CD8-positive, alpha-beta T cell (primary cell): ENCODE measurements at regions of chr16 and their contacts with region 1.

Region 1: DNA sequence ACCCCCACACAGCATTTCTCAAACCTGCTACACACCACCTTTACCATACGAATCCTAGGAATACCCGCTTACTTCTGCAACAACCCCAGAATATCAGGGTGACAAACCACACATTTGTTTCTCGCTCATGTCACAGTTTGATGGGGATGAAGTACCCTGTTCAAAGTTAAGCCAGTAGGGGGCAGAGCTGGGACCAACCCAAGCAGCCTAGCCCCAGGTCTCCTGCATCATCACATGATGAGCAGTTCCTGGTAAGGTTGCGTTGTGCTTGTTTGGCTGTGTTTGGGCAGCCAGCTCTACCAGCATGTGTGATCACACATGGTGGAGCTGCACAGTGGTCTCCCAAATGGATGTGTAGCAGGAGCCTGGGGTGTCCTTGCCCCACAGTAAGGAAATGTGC is 103.6 kb upstream of the C16orf82 start:
- DNase-seq: peak in 2 of 9 experiments; percentile 19 to 26
- ATAC-seq: no peak
- H3K4me3 ChIP-seq: no peak overlapping the region
- H3K4me3 Mint-ChIP-seq: no peak overlapping the region
- H3K27ac ChIP-seq: no peak overlapping the region
- H3K27ac Mint-ChIP-seq: no peak overlapping the region
- H3K4me1 ChIP-seq: no peaks in the 10 kb centered on the region
- H3K4me1 Mint-ChIP-seq: peaks cover 7% of the 10 kb centered on the region
- H3K27me3 ChIP-seq: no peaks in the 10 kb centered on the region
- H3K27me3 Mint-ChIP-seq: peaks cover 16% of the 10 kb centered on the region
- CTCF ChIP-seq: no peak

Region 2: DNA sequence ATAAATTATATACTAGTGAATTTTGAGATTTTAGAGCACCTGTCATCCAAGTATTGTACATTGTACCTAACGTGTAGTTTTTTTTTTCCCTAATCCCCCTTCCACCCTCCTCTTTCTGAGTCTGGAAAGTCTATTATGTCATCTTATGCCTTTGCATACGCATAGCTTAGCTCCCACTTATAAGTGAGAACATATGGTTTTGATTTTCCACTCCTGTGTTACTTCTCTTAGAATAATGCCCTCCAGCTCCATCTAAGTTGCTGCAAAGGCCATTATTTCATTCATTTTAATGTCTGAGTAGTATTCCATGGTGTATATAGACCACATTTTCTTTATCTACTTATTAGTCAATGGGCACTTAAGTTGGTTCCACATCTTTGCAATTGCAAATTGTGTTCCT is 73.4 kb before region 1 on chr16:
- CTCF ChIA-PET with region 1: no interaction called
- POLR2A ChIA-PET with region 1: no interaction called
- intact Hi-C with region 1: loop called in 1 of 2 experiments (anchors 2 kb)
- DNase-seq: no peak
- ATAC-seq: no peak
- H3K4me3 ChIP-seq: no peak overlapping the region
- H3K4me3 Mint-ChIP-seq: no peak overlapping the region
- H3K27ac ChIP-seq: no peak overlapping the region
- H3K27ac Mint-ChIP-seq: no peak overlapping the region
- H3K4me1 ChIP-seq: no peaks in the 10 kb centered on the region
- H3K4me1 Mint-ChIP-seq: no peaks in the 10 kb centered on the region
- H3K27me3 ChIP-seq: no peaks in the 10 kb centered on the region
- H3K27me3 Mint-ChIP-seq: peaks cover 16% of the 10 kb centered on the region
- CTCF ChIP-seq: no peak

Region 3: GRCh38 chr16:26983426-26983825 is 20.3 kb after region 1 on chr16:
- CTCF ChIA-PET with region 1: no interaction called
- POLR2A ChIA-PET with region 1: no interaction called
- intact Hi-C with region 1: no loop called
- DNase-seq: no peak
- ATAC-seq: no peak
- H3K4me3 ChIP-seq: no peak overlapping the region
- H3K4me3 Mint-ChIP-seq: no peak overlapping the region
- H3K27ac ChIP-seq: no peak overlapping the region
- H3K27ac Mint-ChIP-seq: no peak overlapping the region
- H3K4me1 ChIP-seq: no peaks in the 10 kb centered on the region
- H3K4me1 Mint-ChIP-seq: no peaks in the 10 kb centered on the region
- H3K27me3 ChIP-seq: no peaks in the 10 kb centered on the region
- H3K27me3 Mint-ChIP-seq: peaks cover 18% of the 10 kb centered on the region
- CTCF ChIP-seq: no peak